CD14-positive monocyte (primary cell): ENCODE measurements at regions of chr1 and their contacts with region 1.

Region 1: DNA sequence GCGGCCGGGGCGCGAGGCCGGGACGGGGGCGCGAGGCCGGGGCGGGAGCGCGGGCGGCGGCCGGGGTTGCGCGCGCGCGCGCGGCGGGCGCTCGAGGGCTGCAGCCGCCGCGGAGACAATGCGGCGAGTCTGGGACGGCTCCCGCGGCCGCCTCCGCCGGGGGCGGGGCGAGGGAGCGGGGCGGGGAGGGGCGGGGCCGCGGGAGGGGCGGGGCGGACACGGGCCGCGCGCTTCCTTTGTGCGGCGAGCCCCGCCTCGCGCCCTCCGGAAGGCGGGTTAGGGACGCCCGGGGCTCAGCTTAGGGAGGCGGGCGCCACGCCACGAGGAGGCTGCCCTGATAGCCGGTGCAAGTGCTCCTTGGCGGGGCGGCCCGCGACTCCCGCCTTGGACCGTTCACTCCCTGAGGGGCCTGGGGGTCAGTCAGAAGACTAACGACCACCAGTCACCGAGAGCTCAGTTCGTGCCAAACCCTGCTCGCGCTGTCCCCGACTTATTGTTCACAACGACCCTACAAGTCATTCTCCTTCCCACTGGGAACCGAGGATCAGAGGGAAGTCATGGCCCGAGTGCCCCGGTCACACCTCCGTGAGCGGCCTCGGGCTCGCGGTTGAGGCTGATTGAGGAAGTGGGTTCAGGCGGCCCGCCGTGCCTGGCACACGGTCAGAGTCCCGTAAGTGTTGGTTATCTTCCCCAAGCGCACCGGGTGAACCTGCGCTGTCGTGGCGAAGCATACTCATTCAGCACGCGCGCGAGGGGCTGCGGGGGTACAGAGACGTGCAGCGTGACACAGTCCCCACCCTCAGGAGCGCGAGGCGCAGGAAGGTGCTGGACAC is 29.1 kb upstream of the A3GALT2 start:
- DNase-seq: peak; percentile 82 to 84 (median 83)
- H3K4me3 ChIP-seq: peak overlapping the region; percentile 34 to 73 (median 50)
- H3K4me3 Mint-ChIP-seq: peak overlapping the region; percentile 87 to 93
- H3K27ac ChIP-seq: peak overlapping the region; percentile 90
- H3K27ac Mint-ChIP-seq: peak overlapping the region; percentile 96 to 99 (median 98)
- H3K4me1 ChIP-seq: peaks cover 37 to 52% of the 10 kb centered on the region in 2 donors
- H3K4me1 Mint-ChIP-seq: peaks cover 50% of the 10 kb centered on the region
- H3K27me3 ChIP-seq: no peaks in the 10 kb centered on the region
- H3K27me3 Mint-ChIP-seq: peaks cover 0 to 8% (median 3%) of the 10 kb centered on the region in 3 donors
- CTCF ChIP-seq: no peak

Region 2: GRCh38 chr1:33338440-33339211 is 11.4 kb before region 1 on chr1:
- intact Hi-C with region 1: loop called in 1 of 2 experiments (anchors 1 kb)
- DNase-seq: peak; percentile 83 to 96 (median 91)
- H3K4me3 ChIP-seq: peak overlapping the region in 2 of 3 experiments; percentile 11 to 65
- H3K4me3 Mint-ChIP-seq: peak overlapping the region; percentile 59 to 77
- H3K27ac ChIP-seq: peak overlapping the region; percentile 66 to 85
- H3K27ac Mint-ChIP-seq: peak overlapping the region; percentile 87 to 96 (median 91)
- H3K4me1 ChIP-seq: peaks cover 90 to 99% of the 10 kb centered on the region in 2 donors
- H3K4me1 Mint-ChIP-seq: peaks cover 96% of the 10 kb centered on the region
- H3K27me3 ChIP-seq: no peaks in the 10 kb centered on the region
- H3K27me3 Mint-ChIP-seq: peaks cover 0 to 3% (median 0%) of the 10 kb centered on the region in 3 donors
- CTCF ChIP-seq: no peak